ENCODE measurements at regions of chr4 and their contacts with region 1.

Region 1: GRCh38 chr4:36351082-36351666 is 69.8 kb downstream of the DTHD1 start:
- DNase-seq: no peak
- H3K4me3 ChIP-seq: no peak overlapping the region
- H3K27ac ChIP-seq: no peak overlapping the region
- H3K4me1 ChIP-seq: no peaks in the 10 kb centered on the region
- H3K27me3 ChIP-seq: peaks cover 0 to 3% (median 0%) of the 10 kb centered on the region in 4 donors
- CTCF ChIP-seq: peak; percentile 43 to 61 (median 59)
- EP300 ChIP-seq: no peak
- POLR2A ChIP-seq: no peak

Region 2: DNA sequence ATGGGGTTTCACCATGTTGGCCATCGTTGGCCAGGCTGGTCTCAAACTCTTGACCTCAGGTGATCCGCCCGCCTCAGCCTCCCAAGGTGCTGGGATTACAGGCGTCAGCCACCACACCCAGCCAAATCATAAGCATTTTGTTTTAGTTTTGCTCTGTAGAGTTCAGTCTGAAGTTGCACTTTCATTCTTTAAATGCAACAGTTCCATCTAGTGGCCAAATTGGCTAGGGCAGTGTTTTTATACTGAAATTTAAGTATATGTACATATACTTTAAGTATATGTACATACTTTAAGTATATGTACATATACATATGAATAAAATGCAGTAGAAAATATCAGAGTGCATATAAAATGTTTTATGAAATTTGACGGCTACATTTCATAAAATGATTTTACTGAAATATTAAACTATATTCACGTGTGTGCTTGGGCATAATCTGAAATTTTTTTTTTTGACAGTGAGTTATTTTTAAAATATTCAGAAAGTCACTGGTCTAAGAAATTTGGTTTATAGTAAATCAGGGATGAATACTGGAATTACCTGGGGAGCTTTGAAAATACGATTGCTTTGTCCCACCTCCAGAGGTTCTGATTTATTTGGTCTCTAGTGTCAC is 1038.9 kb after region 1 on chr4:
- intact Hi-C with region 1: loop called (anchors 5 kb)
- DNase-seq: no peak
- H3K4me3 ChIP-seq: peak overlapping the region in 1 of 4 donors; percentile 2
- H3K27ac ChIP-seq: no peak overlapping the region
- H3K4me1 ChIP-seq: peaks cover 0 to 9% (median 0%) of the 10 kb centered on the region in 4 donors
- H3K27me3 ChIP-seq: peaks cover 0 to 10% (median 0%) of the 10 kb centered on the region in 4 donors
- CTCF ChIP-seq: peak; percentile 58 to 81 (median 78)
- EP300 ChIP-seq: no peak
- POLR2A ChIP-seq: no peak

Measured in esophagus muscularis mucosa (tissue), 4 donors.